Pancreas (tissue), 10 donors: ENCODE measurements at regions of chr5 and their contacts with region 1.

Region 1: DNA sequence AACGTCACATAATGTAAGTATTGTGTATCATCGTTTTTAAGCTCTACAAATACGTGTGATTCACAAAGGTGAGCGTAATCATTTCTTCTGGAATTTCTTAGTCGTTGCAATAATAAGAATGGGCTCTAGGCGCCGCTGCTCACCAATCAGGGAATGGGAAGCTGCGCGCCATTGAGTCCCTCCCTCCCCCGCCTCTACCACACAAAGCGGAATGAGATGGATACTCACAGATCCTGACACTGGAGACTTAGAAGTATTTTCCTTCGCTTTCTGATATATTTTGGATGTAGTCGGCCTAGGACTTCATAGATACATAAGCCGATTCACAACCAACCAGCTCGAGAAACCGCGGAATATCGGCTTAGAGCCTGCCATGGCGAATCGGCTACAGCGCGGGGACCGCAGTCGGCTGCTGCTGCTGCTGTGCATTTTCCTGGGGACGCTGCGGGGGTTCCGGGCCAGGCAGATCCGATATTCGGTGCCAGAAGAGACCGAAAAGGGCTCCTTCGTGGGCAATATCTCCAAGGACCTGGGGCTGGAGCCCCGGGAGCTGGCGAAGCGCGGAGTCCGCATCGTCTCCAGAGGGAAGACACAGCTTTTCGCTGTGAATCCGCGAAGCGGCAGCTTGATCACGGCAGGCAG is at the start of gene PCDHGA11:
- DNase-seq: no peak
- ATAC-seq: peak in 3 of 4 donors; percentile 38 to 64 (median 61)
- H3K4me3 ChIP-seq: peak within 1 kb of the TSS in 1 of 4 donors; percentile 24
- H3K27ac ChIP-seq: no peak within 1 kb of the TSS
- H3K4me1 ChIP-seq: no peaks in the 10 kb centered on the region
- H3K27me3 ChIP-seq: no peaks in the 10 kb centered on the region
- CTCF ChIP-seq: peak in 1 of 4 donors; percentile 15
- total RNA-seq, gene PCDHGA11: 1.2 to 2.6 (median 1.6) TPM

Region 2: GRCh38 chr5:141359790-141360426 is 61.1 kb before region 1 on chr5 and contains the start of gene PCDHGB2:
- intact Hi-C with region 1: loop called in 1 of 3 experiments (anchors 10 kb)
- DNase-seq: no peak
- ATAC-seq: no peak
- H3K4me3 ChIP-seq: peak within 1 kb of the TSS in 1 of 4 donors; percentile 10
- H3K27ac ChIP-seq: no peak within 1 kb of the TSS
- H3K4me1 ChIP-seq: no peaks in the 10 kb centered on the region
- H3K27me3 ChIP-seq: peaks cover 0 to 5% (median 0%) of the 10 kb centered on the region in 4 donors
- CTCF ChIP-seq: no peak
- total RNA-seq, gene PCDHGB2: 1.8 to 2.8 (median 2.2) TPM